Activated T-helper 2 cell treated with anti-CD3 and anti-CD28 coated beads, Interferon-gamma antibody, Interleukin-2, Interleukin-4, amounts not matched to agents 10 μg/mL and 5 μg/mL and 100 μg/mL, durations not matched to agents 14 hours and 24 hours and 36 hours (primary cell): ENCODE measurements at regions of chr14 and their contacts with region 1.

Region 1: GRCh38 chr14:50060871-50061663 is 55.3 kb downstream of the VCPKMT start:
- DNase-seq: no peak
- H3K4me3 Mint-ChIP-seq: peak overlapping the region; percentile 97
- H3K27ac Mint-ChIP-seq: peak overlapping the region; percentile 100
- H3K4me1 Mint-ChIP-seq: peaks cover 83% of the 10 kb centered on the region
- H3K27me3 Mint-ChIP-seq: no peaks in the 10 kb centered on the region

Region 2: DNA sequence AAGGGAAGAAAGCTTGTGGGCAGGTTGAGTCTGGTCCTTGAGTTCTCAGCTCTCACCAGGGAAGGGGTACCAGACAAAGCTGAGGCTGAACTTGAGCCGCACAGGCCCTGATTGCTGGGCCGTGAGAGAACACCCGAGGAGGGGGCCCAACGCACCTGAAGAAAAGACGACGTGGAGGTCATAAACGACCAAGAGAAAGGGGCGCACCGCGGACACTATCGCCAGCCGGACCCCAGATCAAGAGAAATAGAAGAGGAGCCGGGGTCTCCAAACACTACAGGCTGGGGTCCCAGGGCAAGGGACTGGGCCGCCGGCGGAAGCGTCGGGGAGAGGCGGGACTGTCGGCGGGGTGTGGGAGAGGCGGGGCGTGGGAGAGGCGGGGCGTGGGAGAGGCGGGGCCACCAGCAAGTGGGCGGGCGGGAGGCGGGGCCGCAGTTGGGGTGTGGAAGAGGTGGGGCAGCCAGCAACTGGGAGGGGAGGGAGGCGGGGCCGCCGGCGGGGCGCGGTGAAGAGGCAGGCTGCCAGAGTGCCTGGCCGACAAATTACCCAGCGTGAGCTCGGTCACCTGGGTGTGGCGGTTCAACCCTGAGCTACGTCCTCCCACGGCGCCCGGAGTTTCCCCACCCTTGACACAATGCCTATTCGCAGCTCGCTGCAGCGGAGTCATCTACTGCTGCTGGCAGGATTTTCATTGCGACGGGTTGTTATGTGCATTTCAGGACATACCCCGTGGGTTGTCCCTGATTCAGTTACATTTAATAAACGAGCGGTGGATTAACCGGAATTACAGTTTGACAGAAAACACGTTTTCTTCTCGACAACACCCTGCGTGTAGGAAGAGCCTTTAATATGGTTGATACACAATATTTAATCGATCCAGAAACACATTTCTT is 193.0 kb before region 1 on chr14:
- intact Hi-C with region 1: loop called (anchors 1 kb)
- DNase-seq: peak; percentile 94
- H3K4me3 Mint-ChIP-seq: peak overlapping the region; percentile 91
- H3K27ac Mint-ChIP-seq: peak overlapping the region; percentile 94
- H3K4me1 Mint-ChIP-seq: peaks cover 22% of the 10 kb centered on the region
- H3K27me3 Mint-ChIP-seq: no peaks in the 10 kb centered on the region

Region 3: DNA sequence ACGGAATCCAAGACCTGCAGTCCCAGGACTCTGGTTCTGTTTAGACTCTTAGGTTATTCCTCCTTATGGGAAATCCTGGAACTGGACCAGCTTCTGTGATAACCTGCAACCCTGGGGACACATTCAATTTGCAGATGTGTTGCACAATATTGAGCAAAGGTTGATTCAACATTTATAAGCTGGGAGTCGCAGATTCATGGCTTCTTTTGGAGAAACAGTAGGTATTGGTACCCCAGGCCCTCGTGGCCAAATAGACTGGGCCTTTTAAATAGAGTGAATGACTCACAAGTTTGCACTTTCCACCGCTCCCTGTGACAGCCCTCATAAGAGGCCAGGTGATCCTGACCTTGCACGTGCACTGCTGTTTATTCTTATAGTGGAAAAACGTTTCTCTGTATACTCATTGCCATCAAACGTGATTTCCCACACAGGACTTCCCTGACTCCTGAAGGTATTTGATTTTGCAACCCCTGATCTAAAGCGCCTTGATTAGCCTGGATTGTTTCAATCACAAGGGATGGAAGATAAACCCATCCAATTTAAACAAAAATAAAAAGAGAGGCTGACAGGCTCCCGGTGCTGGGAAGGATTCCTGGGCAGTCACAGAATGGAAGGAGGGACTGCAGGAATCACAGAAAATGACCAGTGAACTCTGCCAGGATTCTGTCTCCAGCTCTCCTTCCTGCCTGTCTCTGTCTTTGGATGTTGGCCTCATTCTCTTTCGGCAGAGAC is 42.7 kb before region 1 on chr14:
- intact Hi-C with region 1: no loop called
- DNase-seq: no peak
- H3K4me3 Mint-ChIP-seq: no peak overlapping the region
- H3K27ac Mint-ChIP-seq: no peak overlapping the region
- H3K4me1 Mint-ChIP-seq: peaks cover 31% of the 10 kb centered on the region
- H3K27me3 Mint-ChIP-seq: no peaks in the 10 kb centered on the region

Region 4: DNA sequence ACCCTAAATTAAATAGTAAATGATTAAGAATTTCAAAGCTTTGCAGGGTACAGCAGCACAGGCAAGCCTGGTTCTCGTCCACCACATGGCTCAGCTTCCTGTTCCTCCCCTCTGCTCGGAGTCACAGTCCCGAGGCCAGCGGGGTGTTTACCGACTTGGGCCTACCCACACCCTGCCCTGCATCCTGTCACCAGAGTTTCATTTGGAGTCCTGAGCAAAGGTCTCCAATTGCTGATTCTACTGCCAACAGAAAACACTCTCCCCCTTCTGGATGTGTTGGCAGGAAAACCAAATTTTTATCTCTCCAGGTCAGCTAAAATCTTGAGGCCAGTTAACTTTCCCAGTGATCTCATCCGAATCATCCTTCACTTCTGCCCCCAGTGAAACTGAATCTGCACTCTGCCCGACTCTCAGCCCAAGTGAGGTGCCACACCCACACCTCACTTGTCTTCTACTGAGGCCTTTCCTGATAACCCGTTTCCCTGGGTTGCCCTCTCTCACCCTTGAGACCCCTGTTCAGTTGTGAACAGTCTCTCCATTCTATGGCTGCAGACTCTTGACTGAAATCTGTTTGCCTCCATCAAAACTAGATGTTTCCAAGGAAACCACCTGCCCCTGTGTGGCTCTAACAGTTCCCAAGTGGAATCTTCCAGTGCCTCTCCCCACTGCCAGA is 15.9 kb before region 1 on chr14:
- intact Hi-C with region 1: loop called (anchors 1 kb)
- DNase-seq: peak; percentile 75
- H3K4me3 Mint-ChIP-seq: no peak overlapping the region
- H3K27ac Mint-ChIP-seq: peak overlapping the region; percentile 88
- H3K4me1 Mint-ChIP-seq: peaks cover 50% of the 10 kb centered on the region
- H3K27me3 Mint-ChIP-seq: no peaks in the 10 kb centered on the region

Region 5: DNA sequence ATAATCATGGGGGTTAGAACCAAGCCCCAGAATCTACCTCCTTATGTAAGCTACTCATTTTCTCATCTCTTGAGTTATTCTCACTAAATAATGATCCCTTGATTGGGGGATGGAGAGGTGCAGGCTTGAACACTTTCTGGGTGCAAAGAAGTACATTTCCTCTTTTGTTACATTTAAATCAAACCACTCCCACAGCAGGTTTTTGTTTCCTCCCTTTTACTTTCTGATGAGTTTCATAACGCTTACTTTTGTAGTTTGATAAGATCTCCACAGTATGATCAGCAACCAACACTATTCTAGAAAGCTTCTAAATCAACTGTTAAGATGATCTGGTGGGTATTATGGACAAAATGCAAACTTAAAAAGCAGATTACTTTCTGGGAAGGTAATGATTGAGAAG is 34.8 kb after region 1 on chr14:
- intact Hi-C with region 1: loop called (anchors 2 kb)
- DNase-seq: no peak
- H3K4me3 Mint-ChIP-seq: peak overlapping the region; percentile 45
- H3K27ac Mint-ChIP-seq: peak overlapping the region; percentile 81
- H3K4me1 Mint-ChIP-seq: peaks cover 56% of the 10 kb centered on the region
- H3K27me3 Mint-ChIP-seq: peaks cover 4% of the 10 kb centered on the region